ENCODE measurements at regions of chr2 and their contacts with region 1.

Region 1: DNA sequence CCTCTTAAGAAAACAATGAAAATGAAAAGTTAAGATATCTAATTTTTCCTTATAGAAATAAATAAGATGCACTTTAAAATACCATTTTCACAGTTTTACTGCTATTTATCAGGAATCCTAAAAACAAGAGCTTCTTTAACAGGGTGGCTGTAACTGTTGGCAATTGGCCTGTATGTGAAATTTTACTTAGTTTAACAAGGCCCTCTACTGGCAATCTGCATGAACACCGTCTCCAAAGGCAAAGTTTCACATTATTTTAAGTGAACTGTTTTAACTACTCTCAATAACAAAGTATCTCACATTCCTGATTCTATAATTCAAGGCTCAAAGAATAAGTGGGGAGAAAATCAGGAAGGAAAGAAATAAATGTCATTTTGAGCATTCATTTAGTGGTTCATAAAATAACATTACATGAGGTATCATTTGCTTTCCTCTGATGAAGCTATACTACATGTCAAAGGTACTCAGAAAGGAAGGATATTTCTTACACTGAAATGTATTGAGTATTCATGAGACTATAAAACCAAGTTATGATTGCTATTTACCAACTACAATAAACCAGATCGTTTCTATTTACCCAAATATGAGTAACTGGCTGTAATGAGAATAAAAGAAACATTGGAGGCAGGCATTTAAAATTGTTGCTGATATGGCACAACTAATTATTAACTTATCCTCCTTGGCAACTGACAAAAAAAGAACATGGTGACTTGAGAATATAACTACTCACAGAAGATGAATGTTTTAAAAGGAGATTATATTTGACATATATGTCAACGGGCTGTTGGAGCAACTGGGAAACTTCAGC is 7.0 kb downstream of the NCKAP5 start:
- DNase-seq: no peak
- ATAC-seq: peak; percentile 80
- H3K4me3 ChIP-seq: no peak overlapping the region
- H3K27ac ChIP-seq: no peak overlapping the region
- H3K4me1 ChIP-seq: no peaks in the 10 kb centered on the region
- H3K27me3 ChIP-seq: no peaks in the 10 kb centered on the region; a peak in 1 of 4 replicates
- CTCF ChIP-seq: peak; percentile 58 to 65 (median 59); a peak in 5 of 6 replicates
- EP300 ChIP-seq: no peak
- POLR2A ChIP-seq: no peak
- RAD21 ChIP-seq: peak; percentile 50

Region 2: GRCh38 chr2:132547074-132547687 is 1014.1 kb before region 1 on chr2:
- CTCF ChIA-PET with region 1: interaction called, 13 read pairs
- POLR2A ChIA-PET with region 1: no interaction called
- RAD21 ChIA-PET with region 1: interaction called, 11 read pairs
- SMC1A ChIA-PET with region 1: interaction called, 6 read pairs
- in situ Hi-C with region 1: loop called (anchors 25 kb)
- intact Hi-C with region 1: loop called (anchors 5 kb)
- DNase-seq: peak; percentile 8
- ATAC-seq: peak; percentile 78
- H3K4me3 ChIP-seq: no peak overlapping the region
- H3K27ac ChIP-seq: no peak overlapping the region
- H3K4me1 ChIP-seq: no peaks in the 10 kb centered on the region
- H3K27me3 ChIP-seq: no peaks in the 10 kb centered on the region
- CTCF ChIP-seq: peak; percentile 51 to 69 (median 60); a peak in 5 of 6 replicates
- EP300 ChIP-seq: no peak
- POLR2A ChIP-seq: no peak
- RAD21 ChIP-seq: peak; percentile 71

Region 3: DNA sequence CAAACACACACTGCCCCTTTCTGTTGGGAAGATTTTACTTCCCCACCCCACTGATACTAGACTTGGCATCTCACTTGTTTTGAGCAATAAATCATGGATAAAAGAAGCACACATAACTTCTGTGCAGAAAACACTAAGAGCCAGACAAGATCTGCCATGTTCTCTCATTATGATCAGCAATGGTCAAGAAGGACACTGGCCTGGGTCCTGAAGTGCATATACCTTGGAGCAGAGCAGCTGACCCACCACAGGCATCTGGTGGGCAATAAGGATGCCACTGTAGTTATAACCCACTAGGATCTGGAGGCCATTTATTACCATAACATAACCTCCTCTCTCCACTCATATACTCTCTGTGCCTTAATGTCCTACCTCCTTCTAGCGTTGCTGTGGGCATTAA is 331.3 kb before region 1 on chr2:
- CTCF ChIA-PET with region 1: interaction called, 12 read pairs
- POLR2A ChIA-PET with region 1: no interaction called
- RAD21 ChIA-PET with region 1: no interaction called
- SMC1A ChIA-PET with region 1: no interaction called
- in situ Hi-C with region 1: no loop called
- intact Hi-C with region 1: no loop called
- DNase-seq: no peak
- ATAC-seq: no peak
- H3K4me3 ChIP-seq: no peak overlapping the region
- H3K27ac ChIP-seq: no peak overlapping the region
- H3K4me1 ChIP-seq: no peaks in the 10 kb centered on the region
- H3K27me3 ChIP-seq: no peaks in the 10 kb centered on the region; a peak in 1 of 4 replicates
- CTCF ChIP-seq: no peak
- EP300 ChIP-seq: no peak
- POLR2A ChIP-seq: no peak
- RAD21 ChIP-seq: no peak

Region 4: GRCh38 chr2:133352719-133353118 is 208.5 kb before region 1 on chr2:
- CTCF ChIA-PET with region 1: interaction called, 43 read pairs
- POLR2A ChIA-PET with region 1: no interaction called
- RAD21 ChIA-PET with region 1: interaction called, 19 read pairs
- SMC1A ChIA-PET with region 1: interaction called, 31 read pairs
- in situ Hi-C with region 1: no loop called
- intact Hi-C with region 1: loop called (anchors 5 kb)
- DNase-seq: no peak
- ATAC-seq: no peak
- H3K4me3 ChIP-seq: no peak overlapping the region
- H3K27ac ChIP-seq: no peak overlapping the region
- H3K4me1 ChIP-seq: no peaks in the 10 kb centered on the region
- H3K27me3 ChIP-seq: no peaks in the 10 kb centered on the region
- CTCF ChIP-seq: no peak
- EP300 ChIP-seq: no peak
- POLR2A ChIP-seq: no peak
- RAD21 ChIP-seq: no peak

Region 5: DNA sequence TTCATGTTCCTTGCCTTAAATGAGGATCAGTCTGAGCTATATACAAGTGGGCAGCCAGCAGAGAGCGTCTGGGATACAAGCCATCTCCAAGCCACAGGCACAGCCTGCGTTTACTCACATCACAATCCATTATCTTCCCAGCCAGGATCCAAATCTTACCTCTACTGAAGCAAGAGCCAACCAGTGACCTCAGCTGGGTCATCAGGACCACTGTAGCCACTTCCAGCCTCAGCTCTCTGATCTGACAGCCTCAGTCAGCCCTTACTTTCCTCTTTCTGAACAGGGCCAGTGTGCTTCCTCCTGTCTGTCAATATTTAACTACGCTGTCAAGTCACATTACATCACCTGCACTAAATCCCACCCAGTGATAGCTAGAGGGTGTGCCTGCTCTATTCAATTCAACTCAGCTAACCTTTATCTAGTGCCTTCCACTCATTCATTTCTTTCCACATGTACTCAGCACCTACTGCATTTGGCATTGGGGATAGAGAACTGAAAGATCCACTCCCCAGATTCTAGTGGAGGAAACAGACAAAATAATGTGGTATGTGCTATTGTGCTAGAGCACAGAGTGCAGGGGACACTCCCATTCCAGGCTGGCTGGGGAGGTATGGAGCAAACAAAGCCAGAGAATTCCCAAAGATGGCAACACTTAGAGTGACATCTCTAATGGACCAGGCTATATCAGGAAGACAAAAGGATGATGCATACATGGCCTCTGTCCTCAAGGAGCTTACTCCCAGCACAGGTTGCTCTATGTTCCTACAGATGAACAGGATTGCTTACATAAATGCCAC is 139.5 kb before region 1 on chr2:
- CTCF ChIA-PET with region 1: interaction called, 43 read pairs
- POLR2A ChIA-PET with region 1: interaction called, 3 read pairs
- RAD21 ChIA-PET with region 1: interaction called, 32 read pairs
- SMC1A ChIA-PET with region 1: interaction called, 46 read pairs
- in situ Hi-C with region 1: no loop called
- intact Hi-C with region 1: loop called (anchors 2 kb)
- DNase-seq: peak; percentile 61
- ATAC-seq: peak; percentile 92
- H3K4me3 ChIP-seq: no peak overlapping the region
- H3K27ac ChIP-seq: no peak overlapping the region
- H3K4me1 ChIP-seq: no peaks in the 10 kb centered on the region
- H3K27me3 ChIP-seq: peaks cover 0 to 4% of the 10 kb centered on the region in 2 experiments; a peak in 1 of 4 replicates
- CTCF ChIP-seq: peak in 1 of 3 experiments; percentile 16; a peak in 1 of 6 replicates
- EP300 ChIP-seq: no peak
- POLR2A ChIP-seq: no peak
- RAD21 ChIP-seq: no peak

Region 6: DNA sequence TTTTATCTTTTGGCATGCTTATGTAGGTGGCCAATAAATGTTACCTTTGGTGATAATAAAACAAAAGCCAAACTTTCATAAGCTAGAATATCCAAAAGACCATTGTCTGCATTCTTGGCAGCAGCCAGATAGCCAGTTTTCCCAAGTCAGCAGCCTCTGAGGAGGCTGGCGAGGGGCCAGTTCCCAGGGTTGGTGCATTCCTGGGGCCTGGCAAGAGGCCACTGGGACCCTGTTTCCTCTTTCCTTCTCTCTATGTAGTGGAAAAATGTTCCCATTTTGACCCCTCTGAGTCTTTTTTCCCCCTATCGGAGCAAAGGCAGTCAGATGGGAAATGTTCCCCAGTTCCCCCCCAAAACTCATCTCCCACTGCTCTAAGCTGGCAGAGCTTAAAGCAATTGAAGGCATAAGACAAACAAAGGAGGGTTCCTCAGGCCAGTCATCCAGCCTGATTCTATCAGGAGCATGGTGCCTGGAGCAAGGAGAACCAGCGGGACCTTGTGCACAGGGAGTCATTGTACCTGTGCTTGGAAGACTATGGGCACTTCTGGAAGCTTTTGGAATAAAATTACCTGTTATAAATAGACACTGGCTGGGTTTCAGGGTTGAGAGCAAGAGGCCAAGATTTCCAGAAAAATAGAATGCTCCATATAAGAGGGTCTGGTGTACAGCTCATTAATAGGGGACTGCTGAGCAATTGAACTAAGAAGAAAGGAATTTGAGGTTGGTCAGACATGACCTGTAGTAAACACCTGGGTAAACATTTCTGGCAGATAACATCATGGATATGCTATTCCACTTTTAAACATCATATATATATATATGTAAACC is 56.5 kb before region 1 on chr2:
- CTCF ChIA-PET with region 1: interaction called, 14 read pairs
- POLR2A ChIA-PET with region 1: no interaction called
- RAD21 ChIA-PET with region 1: interaction called, 19 read pairs
- SMC1A ChIA-PET with region 1: interaction called, 45 read pairs
- in situ Hi-C with region 1: no loop called
- intact Hi-C with region 1: loop called (anchors 1 kb)
- DNase-seq: no peak
- ATAC-seq: no peak
- H3K4me3 ChIP-seq: no peak overlapping the region
- H3K27ac ChIP-seq: no peak overlapping the region
- H3K4me1 ChIP-seq: no peaks in the 10 kb centered on the region
- H3K27me3 ChIP-seq: no peaks in the 10 kb centered on the region
- CTCF ChIP-seq: no peak
- EP300 ChIP-seq: no peak
- POLR2A ChIP-seq: no peak
- RAD21 ChIP-seq: no peak

Region 7: DNA sequence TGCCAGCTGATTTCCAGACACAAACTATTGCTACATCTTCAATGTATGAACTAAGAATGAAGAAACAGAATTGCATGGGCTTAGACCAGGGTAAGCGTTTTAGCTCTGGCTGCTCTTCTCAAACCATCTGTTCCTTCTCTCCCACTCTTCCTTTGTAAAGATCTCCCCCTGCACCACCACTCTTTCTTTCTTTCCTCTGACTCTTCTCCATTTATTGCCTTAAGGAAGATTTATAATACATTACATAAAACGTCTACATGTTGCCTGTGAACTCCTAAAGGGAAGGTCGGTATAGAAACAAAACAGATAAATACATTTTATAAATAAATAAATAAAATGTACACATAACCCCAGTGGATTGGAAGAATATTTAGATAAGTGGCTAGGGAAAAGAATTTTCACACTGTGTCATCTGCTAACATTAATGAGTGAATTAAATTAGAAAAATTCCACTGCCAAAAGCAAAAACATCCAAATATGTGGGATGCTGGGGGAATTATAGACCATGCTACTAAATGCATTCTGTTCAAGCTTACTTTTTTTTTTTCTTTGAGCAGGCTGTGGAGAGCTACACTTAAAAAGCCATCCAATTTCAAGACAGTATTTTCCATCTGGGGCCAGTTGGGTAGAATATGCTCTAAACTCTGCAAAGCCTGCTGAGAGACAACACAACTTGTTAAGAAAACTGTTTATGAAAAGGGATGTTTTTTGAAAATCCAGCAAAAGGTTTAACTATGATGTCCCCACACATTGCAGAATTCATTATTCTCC is 34.5 kb before region 1 on chr2:
- CTCF ChIA-PET with region 1: interaction called, 12 read pairs
- POLR2A ChIA-PET with region 1: no interaction called
- RAD21 ChIA-PET with region 1: interaction called, 3 read pairs
- SMC1A ChIA-PET with region 1: interaction called, 5 read pairs
- in situ Hi-C with region 1: no loop called
- intact Hi-C with region 1: no loop called
- DNase-seq: no peak
- ATAC-seq: no peak
- H3K4me3 ChIP-seq: no peak overlapping the region
- H3K27ac ChIP-seq: no peak overlapping the region
- H3K4me1 ChIP-seq: no peaks in the 10 kb centered on the region
- H3K27me3 ChIP-seq: no peaks in the 10 kb centered on the region
- CTCF ChIP-seq: no peak
- EP300 ChIP-seq: no peak
- POLR2A ChIP-seq: no peak
- RAD21 ChIP-seq: no peak

Region 8: GRCh38 chr2:133748007-133748700 is 186.9 kb after region 1 on chr2:
- CTCF ChIA-PET with region 1: no interaction called
- POLR2A ChIA-PET with region 1: no interaction called
- RAD21 ChIA-PET with region 1: no interaction called
- SMC1A ChIA-PET with region 1: no interaction called
- in situ Hi-C with region 1: no loop called
- intact Hi-C with region 1: no loop called
- DNase-seq: no peak
- ATAC-seq: no peak
- H3K4me3 ChIP-seq: no peak overlapping the region
- H3K27ac ChIP-seq: no peak overlapping the region
- H3K4me1 ChIP-seq: no peaks in the 10 kb centered on the region
- H3K27me3 ChIP-seq: no peaks in the 10 kb centered on the region; a peak in 1 of 4 replicates
- CTCF ChIP-seq: no peak
- EP300 ChIP-seq: no peak
- POLR2A ChIP-seq: no peak
- RAD21 ChIP-seq: no peak

Measured in GM12878 (cell line).